ENCODE measurements at regions of chr6 and their contacts with region 1.

Region 1: DNA sequence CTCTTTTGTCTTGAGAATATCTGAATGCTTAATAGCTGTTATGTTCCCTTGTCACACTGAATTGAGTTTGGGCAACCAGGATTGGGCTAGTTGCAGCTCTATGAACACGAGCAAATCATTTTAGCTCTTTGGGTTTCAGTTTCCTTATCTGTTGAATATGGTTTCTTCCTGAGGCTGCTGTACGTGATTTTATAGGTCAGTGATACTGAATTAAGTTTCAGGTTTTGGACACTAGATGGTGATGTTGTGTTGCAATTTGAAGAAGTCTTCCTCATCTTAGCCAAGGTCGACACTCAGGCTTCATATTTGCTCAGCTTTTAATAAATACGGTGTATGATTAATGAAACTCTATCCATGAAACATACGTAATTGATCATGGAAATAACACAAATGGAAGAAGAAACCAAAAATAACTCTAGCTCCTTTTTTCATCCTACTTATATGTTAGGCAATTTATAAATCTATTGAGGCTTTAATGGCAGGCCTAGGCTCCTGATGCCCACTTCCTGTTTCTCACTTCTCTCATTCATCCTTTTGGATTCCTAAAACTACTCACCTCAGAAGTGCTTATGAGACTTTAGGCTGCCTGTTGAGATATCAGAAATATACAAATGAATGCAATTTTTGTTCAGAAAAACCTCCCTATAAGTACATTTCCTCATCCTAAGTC is 354.1 kb upstream of the MAP3K7 start:
- DNase-seq: peak; percentile 80
- ATAC-seq: peak; percentile 93
- H3K4me3 ChIP-seq: no peak overlapping the region
- H3K27ac ChIP-seq: no peak overlapping the region
- H3K4me1 ChIP-seq: peaks cover 3% of the 10 kb centered on the region; the same call in 1 of the 2 replicates
- H3K27me3 ChIP-seq: no peaks in the 10 kb centered on the region
- CTCF ChIP-seq: peak; percentile 34 to 76 (median 58); a peak in 5 of 6 replicates
- EP300 ChIP-seq: no peak
- POLR2A ChIP-seq: no peak
- RAD21 ChIP-seq: peak; percentile 77

Region 2: DNA sequence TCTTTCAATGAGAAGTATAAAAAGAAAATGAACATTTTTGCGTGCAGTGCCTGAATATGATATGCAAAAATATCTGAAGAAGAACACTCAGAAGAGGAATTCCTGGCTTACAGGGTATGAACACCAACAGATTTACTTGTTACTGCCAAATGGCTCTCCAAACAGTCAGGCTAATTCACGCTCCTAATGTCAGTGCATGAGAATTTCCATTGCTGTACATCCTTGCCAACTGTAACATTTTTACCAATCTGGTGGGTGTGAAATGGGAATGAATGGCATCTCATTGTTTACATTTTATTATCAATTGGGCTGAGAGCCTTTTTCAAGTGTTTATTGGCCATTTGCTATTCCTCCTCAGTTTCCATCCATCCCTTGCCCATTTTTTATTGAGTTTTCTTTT is 11.2 kb after region 1 on chr6:
- CTCF ChIA-PET with region 1: interaction called, 11 read pairs
- POLR2A ChIA-PET with region 1: no interaction called
- RAD21 ChIA-PET with region 1: interaction called, 6 read pairs
- SMC1A ChIA-PET with region 1: interaction called, 7 read pairs
- in situ Hi-C with region 1: no loop called
- intact Hi-C with region 1: no loop called
- DNase-seq: no peak
- ATAC-seq: no peak
- H3K4me3 ChIP-seq: no peak overlapping the region
- H3K27ac ChIP-seq: no peak overlapping the region
- H3K4me1 ChIP-seq: no peaks in the 10 kb centered on the region
- H3K27me3 ChIP-seq: no peaks in the 10 kb centered on the region
- CTCF ChIP-seq: no peak
- EP300 ChIP-seq: no peak
- POLR2A ChIP-seq: no peak
- RAD21 ChIP-seq: no peak

Region 3: GRCh38 chr6:91075244-91075976 is 134.5 kb after region 1 on chr6:
- CTCF ChIA-PET with region 1: interaction called, 37 read pairs
- POLR2A ChIA-PET with region 1: no interaction called
- RAD21 ChIA-PET with region 1: interaction called, 34 read pairs
- SMC1A ChIA-PET with region 1: interaction called, 13 read pairs
- in situ Hi-C with region 1: no loop called
- intact Hi-C with region 1: no loop called
- DNase-seq: no peak
- ATAC-seq: no peak
- H3K4me3 ChIP-seq: no peak overlapping the region
- H3K27ac ChIP-seq: no peak overlapping the region
- H3K4me1 ChIP-seq: no peaks in the 10 kb centered on the region
- H3K27me3 ChIP-seq: no peaks in the 10 kb centered on the region
- CTCF ChIP-seq: no peak
- EP300 ChIP-seq: no peak
- POLR2A ChIP-seq: no peak
- RAD21 ChIP-seq: no peak

Region 4: GRCh38 chr6:91276315-91276714 is 335.4 kb after region 1 on chr6:
- CTCF ChIA-PET with region 1: interaction called, 5 read pairs
- POLR2A ChIA-PET with region 1: interaction called, 6 read pairs
- RAD21 ChIA-PET with region 1: interaction called, 4 read pairs
- SMC1A ChIA-PET with region 1: interaction called, 8 read pairs
- in situ Hi-C with region 1: no loop called
- intact Hi-C with region 1: loop called (anchors 5 kb)
- DNase-seq: no peak
- ATAC-seq: peak; percentile 86
- H3K4me3 ChIP-seq: no peak overlapping the region
- H3K27ac ChIP-seq: no peak overlapping the region
- H3K4me1 ChIP-seq: no peaks in the 10 kb centered on the region
- H3K27me3 ChIP-seq: no peaks in the 10 kb centered on the region
- CTCF ChIP-seq: peak in 2 of 3 experiments; percentile 33 to 47; a peak in 4 of 6 replicates
- EP300 ChIP-seq: no peak
- POLR2A ChIP-seq: no peak
- RAD21 ChIP-seq: peak; percentile 36; the same call in 1 of the 2 replicates

Region 5: DNA sequence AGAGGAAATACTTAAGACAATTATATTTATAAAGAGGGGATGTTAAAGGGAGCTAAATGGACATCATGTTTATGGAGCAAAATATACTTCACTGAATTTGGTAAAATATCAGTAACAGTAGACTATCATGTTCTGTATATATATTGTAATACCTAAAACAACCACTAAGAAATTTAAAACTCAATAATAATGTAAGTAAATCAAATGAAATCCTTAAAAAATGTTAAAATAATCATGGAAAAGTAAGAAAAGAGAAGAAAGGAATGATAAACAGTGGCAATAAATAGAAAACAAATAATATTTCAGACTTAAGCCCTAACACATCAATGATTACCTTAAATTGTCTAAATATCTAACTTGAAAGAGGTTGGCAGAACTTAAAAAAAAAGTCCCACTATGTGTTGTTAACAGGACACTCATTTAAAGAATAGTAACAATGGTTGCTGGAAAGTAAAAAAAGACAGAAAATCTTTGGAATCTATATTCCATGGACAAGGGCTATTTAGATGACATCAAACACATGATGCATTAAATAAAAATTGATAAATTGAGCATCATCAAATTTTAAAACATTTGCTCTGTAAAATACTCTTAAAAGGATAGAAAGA is 488.1 kb after region 1 on chr6:
- CTCF ChIA-PET with region 1: no interaction called
- POLR2A ChIA-PET with region 1: no interaction called
- RAD21 ChIA-PET with region 1: no interaction called
- SMC1A ChIA-PET with region 1: no interaction called
- in situ Hi-C with region 1: no loop called
- intact Hi-C with region 1: no loop called
- DNase-seq: no peak
- ATAC-seq: no peak
- H3K4me3 ChIP-seq: no peak overlapping the region
- H3K27ac ChIP-seq: no peak overlapping the region
- H3K4me1 ChIP-seq: no peaks in the 10 kb centered on the region
- H3K27me3 ChIP-seq: no peaks in the 10 kb centered on the region
- CTCF ChIP-seq: no peak
- EP300 ChIP-seq: no peak
- POLR2A ChIP-seq: no peak
- RAD21 ChIP-seq: no peak

Region 6: GRCh38 chr6:92777146-92777740 is 1836.3 kb after region 1 on chr6:
- CTCF ChIA-PET with region 1: interaction called, 5 read pairs
- POLR2A ChIA-PET with region 1: no interaction called
- RAD21 ChIA-PET with region 1: interaction called, 7 read pairs
- SMC1A ChIA-PET with region 1: interaction called, 4 read pairs
- in situ Hi-C with region 1: no loop called
- intact Hi-C with region 1: loop called (anchors 5 kb)
- DNase-seq: no peak
- ATAC-seq: peak; percentile 87
- H3K4me3 ChIP-seq: no peak overlapping the region
- H3K27ac ChIP-seq: no peak overlapping the region
- H3K4me1 ChIP-seq: no peaks in the 10 kb centered on the region
- H3K27me3 ChIP-seq: no peaks in the 10 kb centered on the region
- CTCF ChIP-seq: peak; percentile 47
- EP300 ChIP-seq: no peak
- POLR2A ChIP-seq: no peak
- RAD21 ChIP-seq: peak; percentile 63